ENCODE measurements at regions of chr6 and their contacts with region 1.

Region 1: GRCh38 chr6:50602292-50602691 is 111.0 kb upstream of the TFAP2D start:
- DNase-seq: no peak
- H3K4me3 Mint-ChIP-seq: no peak overlapping the region
- H3K27ac Mint-ChIP-seq: no peak overlapping the region
- H3K4me1 Mint-ChIP-seq: no peaks in the 10 kb centered on the region
- H3K27me3 Mint-ChIP-seq: no peaks in the 10 kb centered on the region

Region 2: GRCh38 chr6:49625140-49625539 is 977.2 kb before region 1 on chr6:
- CTCF ChIA-PET with region 1: no interaction called
- intact Hi-C with region 1: loop called (anchors 5 kb)
- DNase-seq: no peak
- H3K4me3 Mint-ChIP-seq: no peak overlapping the region
- H3K27ac Mint-ChIP-seq: no peak overlapping the region
- H3K4me1 Mint-ChIP-seq: no peaks in the 10 kb centered on the region
- H3K27me3 Mint-ChIP-seq: peaks cover 1% of the 10 kb centered on the region

Region 3: DNA sequence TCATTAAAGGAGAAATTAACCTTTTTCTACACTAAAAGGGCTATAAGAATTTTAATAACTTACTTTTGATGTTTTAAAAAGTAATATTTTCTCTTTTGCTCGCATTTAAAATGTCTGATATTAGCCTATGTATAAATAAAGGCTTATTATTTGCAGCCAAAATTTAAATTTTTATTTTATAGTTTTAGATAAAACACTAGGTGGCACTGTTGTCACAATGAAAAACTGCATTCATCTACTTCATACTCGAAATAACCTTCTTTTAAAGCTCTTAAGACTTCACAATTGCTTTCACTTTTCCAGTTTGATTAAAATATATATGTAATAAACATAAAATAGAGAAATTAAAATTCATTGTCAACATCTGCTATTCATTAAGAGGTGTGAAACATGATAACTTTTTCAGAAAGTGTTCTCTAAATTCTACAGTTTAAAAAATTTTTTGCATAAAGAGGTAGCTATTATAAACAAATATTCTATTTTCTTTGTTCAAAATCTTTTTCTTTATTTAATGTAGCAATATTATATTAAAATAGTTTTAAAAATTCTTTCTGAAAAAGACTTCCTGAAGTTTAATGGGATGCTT is 473.8 kb before region 1 on chr6:
- CTCF ChIA-PET with region 1: interaction called, 7 read pairs
- intact Hi-C with region 1: loop called (anchors 1 kb)
- DNase-seq: no peak
- H3K4me3 Mint-ChIP-seq: no peak overlapping the region
- H3K27ac Mint-ChIP-seq: no peak overlapping the region
- H3K4me1 Mint-ChIP-seq: no peaks in the 10 kb centered on the region
- H3K27me3 Mint-ChIP-seq: no peaks in the 10 kb centered on the region

Region 4: GRCh38 chr6:50791900-50792508 is 189.7 kb after region 1 on chr6:
- CTCF ChIA-PET with region 1: no interaction called
- intact Hi-C with region 1: loop called (anchors 5 kb)
- DNase-seq: no peak
- H3K4me3 Mint-ChIP-seq: no peak overlapping the region
- H3K27ac Mint-ChIP-seq: no peak overlapping the region
- H3K4me1 Mint-ChIP-seq: no peaks in the 10 kb centered on the region
- H3K27me3 Mint-ChIP-seq: no peaks in the 10 kb centered on the region